ENCODE measurements at regions of chr11 and their contacts with region 1.

Region 1: DNA sequence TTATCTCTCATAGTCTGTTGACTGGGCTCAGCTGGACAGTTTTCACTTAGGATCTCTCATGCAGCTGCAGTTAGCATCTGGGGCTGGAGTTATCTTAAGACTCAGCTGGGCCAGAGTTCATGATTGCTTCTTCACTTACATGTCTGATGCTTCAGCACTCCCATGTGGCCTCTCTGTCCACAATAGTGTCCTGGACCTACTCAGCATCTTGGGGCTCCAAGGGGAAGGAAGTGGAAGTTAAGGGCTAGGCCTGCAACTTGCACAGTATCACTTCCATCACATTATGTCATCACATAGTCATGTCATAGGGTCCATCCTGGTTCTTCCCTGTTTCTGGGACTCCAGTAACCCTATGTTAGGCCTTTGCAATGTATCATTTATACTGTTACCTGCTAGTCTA is 115.9 kb downstream of the C11orf65 start:
- DNase-seq: no peak
- ATAC-seq: no peak
- H3K4me3 ChIP-seq: no peak overlapping the region
- H3K4me3 Mint-ChIP-seq: no peak overlapping the region
- H3K27ac ChIP-seq: no peak overlapping the region
- H3K27ac Mint-ChIP-seq: peak overlapping the region; percentile 50
- H3K4me1 ChIP-seq: no peaks in the 10 kb centered on the region
- H3K4me1 Mint-ChIP-seq: no peaks in the 10 kb centered on the region
- H3K27me3 ChIP-seq: no peaks in the 10 kb centered on the region
- H3K27me3 Mint-ChIP-seq: no peaks in the 10 kb centered on the region
- CTCF ChIP-seq: no peak

Region 2: DNA sequence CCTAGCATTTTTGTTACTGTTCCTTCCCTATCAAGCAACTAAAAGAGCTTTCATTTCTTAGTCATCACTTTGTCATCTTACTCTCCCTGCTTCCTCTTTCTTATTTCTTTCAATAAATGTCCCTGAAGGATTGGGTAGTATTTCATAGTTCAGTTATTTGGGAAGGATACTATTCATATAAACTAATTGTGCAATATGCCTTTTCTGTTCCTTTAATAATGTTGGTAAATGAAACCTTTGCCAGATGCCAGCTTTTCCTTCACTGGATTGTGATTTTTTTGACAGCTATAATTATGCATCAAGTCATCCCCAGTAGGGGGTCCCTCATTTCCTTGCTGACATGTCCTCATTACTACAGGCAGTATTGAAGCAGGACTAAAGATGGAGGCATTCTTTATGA is 26.9 kb before region 1 on chr11:
- CTCF ChIA-PET with region 1: interaction called, 5 read pairs
- POLR2A ChIA-PET with region 1: no interaction called
- intact Hi-C with region 1: loop called in 1 of 2 experiments (anchors 2 kb)
- DNase-seq: no peak
- ATAC-seq: no peak
- H3K4me3 ChIP-seq: no peak overlapping the region
- H3K4me3 Mint-ChIP-seq: no peak overlapping the region
- H3K27ac ChIP-seq: no peak overlapping the region
- H3K27ac Mint-ChIP-seq: peak overlapping the region; percentile 24
- H3K4me1 ChIP-seq: no peaks in the 10 kb centered on the region
- H3K4me1 Mint-ChIP-seq: no peaks in the 10 kb centered on the region
- H3K27me3 ChIP-seq: no peaks in the 10 kb centered on the region
- H3K27me3 Mint-ChIP-seq: no peaks in the 10 kb centered on the region
- CTCF ChIP-seq: no peak

Region 3: GRCh38 chr11:108432783-108433182 is 81.3 kb after region 1 on chr11:
- CTCF ChIA-PET with region 1: no interaction called
- POLR2A ChIA-PET with region 1: no interaction called
- intact Hi-C with region 1: no loop called
- DNase-seq: no peak
- ATAC-seq: no peak
- H3K4me3 ChIP-seq: no peak overlapping the region
- H3K4me3 Mint-ChIP-seq: no peak overlapping the region
- H3K27ac ChIP-seq: no peak overlapping the region
- H3K27ac Mint-ChIP-seq: no peak overlapping the region
- H3K4me1 ChIP-seq: no peaks in the 10 kb centered on the region
- H3K4me1 Mint-ChIP-seq: no peaks in the 10 kb centered on the region
- H3K27me3 ChIP-seq: no peaks in the 10 kb centered on the region
- H3K27me3 Mint-ChIP-seq: no peaks in the 10 kb centered on the region
- CTCF ChIP-seq: no peak

Region 4: GRCh38 chr11:108847298-108847697 is 495.8 kb after region 1 on chr11:
- CTCF ChIA-PET with region 1: no interaction called
- POLR2A ChIA-PET with region 1: no interaction called
- intact Hi-C with region 1: no loop called
- DNase-seq: no peak
- ATAC-seq: no peak
- H3K4me3 ChIP-seq: no peak overlapping the region
- H3K4me3 Mint-ChIP-seq: no peak overlapping the region
- H3K27ac ChIP-seq: no peak overlapping the region
- H3K27ac Mint-ChIP-seq: no peak overlapping the region
- H3K4me1 ChIP-seq: no peaks in the 10 kb centered on the region
- H3K4me1 Mint-ChIP-seq: peaks cover under 1% of the 10 kb centered on the region
- H3K27me3 ChIP-seq: no peaks in the 10 kb centered on the region
- H3K27me3 Mint-ChIP-seq: no peaks in the 10 kb centered on the region
- CTCF ChIP-seq: no peak

Measured in CD4-positive, alpha-beta T cell (primary cell).